ENCODE measurements at regions of chr18 and their contacts with region 1.

Region 1: DNA sequence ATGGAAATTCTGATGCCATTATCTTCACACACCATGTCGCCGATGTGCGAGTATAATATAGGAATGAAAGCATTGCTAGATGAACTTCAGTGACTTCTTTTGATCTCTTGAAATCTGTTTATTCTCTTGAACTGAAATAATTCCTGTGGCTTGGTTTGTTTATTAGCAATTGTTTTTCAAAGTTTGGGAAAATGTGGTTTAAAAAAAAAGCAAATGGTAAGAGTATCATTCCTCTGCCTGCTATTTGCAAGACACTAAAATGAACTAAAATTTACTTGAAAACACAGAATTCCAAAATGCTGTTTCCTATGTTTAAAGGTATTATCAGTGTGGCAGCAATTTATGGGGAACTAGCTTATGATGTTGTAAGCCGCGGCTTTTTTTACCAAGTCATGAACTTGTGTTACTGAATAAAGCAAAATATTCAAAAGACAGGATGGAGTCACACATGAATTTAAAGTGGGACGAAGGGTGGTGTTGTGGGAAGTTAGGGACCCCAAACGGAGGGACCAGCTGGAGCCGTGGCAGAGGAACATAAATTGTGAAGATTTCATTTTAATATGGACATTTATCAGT is 96.4 kb downstream of the COLEC12 start:
- DNase-seq: no peak
- H3K4me3 ChIP-seq: no peak overlapping the region
- H3K27ac ChIP-seq: no peak overlapping the region
- H3K27me3 ChIP-seq: no peaks in the 10 kb centered on the region
- CTCF ChIP-seq: no peak

Region 2: GRCh38 chr18:415617-416612 is 11.8 kb after region 1 on chr18:
- CTCF ChIA-PET with region 1: interaction called, 10 read pairs
- POLR2A ChIA-PET with region 1: no interaction called
- DNase-seq: no peak
- H3K4me3 ChIP-seq: no peak overlapping the region
- H3K27ac ChIP-seq: peak overlapping the region; percentile 89
- H3K27me3 ChIP-seq: no peaks in the 10 kb centered on the region
- CTCF ChIP-seq: no peak

Measured in AG04450 (cell line).